BJ (cell line): ENCODE measurements at regions of chr1 and their contacts with region 1.

Region 1: DNA sequence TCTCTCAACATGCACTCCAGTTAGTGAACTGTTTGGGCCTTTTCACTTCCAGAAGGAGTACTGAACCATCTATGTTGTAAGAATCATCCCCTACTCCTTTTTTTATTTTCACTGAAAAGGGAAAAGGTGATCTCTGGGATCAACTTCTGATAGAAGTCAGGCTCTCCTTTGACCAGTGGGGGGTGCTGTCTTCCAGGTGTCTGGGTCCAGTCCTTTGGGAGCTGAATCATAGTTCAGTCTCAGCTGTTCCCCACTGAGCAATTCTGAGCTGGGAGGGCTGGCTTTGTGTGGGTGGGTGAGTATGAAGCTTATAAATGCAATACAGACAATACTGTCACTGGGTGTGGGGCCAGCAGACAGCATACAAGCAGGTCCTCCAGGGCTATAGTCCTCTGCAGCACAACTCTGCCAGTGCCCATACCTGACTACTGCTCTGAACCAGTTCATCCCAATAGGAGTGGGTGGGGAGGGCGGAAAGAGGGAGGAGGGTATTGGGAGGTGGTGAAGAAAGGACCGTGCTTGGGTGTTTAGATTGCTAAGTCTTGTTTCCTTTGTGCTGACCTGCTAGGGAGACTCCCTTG is 12.5 kb upstream of the SARS1 start:
- DNase-seq: peak; percentile 65
- H3K4me3 ChIP-seq: no peak overlapping the region
- H3K27me3 ChIP-seq: no peaks in the 10 kb centered on the region
- CTCF ChIP-seq: peak; percentile 85

Region 2: GRCh38 chr1:109112652-109113285 is 88.4 kb before region 1 on chr1:
- CTCF ChIA-PET with region 1: interaction called, 10 read pairs
- POLR2A ChIA-PET with region 1: no interaction called
- DNase-seq: peak; percentile 44
- H3K4me3 ChIP-seq: peak overlapping the region; percentile 3; the same call in 1 of the 2 replicates
- H3K27me3 ChIP-seq: peaks cover 24% of the 10 kb centered on the region
- CTCF ChIP-seq: peak; percentile 99

Region 3: DNA sequence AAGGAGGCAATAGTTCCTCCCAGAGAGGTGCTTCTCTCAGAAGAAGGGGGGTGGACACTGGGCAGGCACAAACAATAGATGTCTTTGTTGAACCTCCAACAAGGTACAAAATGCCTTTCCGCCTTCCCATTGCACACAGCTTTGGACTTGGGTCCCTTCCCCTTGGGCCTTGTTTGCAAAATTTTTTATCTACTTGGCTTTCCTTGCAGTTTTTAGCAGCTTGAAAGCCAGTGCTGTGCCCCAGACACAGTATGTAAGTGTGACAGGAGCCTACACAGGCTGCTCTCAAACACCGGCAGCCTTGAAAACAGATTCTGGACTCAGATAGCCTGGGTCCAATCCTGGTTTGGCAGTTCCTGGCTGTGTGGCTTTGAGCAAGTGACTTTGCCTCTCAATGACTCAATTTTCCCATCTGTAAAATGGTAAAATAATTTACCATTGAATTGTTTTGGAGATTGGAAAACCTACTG is 44.3 kb before region 1 on chr1:
- CTCF ChIA-PET with region 1: no interaction called
- POLR2A ChIA-PET with region 1: no interaction called
- DNase-seq: no peak
- H3K4me3 ChIP-seq: no peak overlapping the region
- H3K27me3 ChIP-seq: no peaks in the 10 kb centered on the region
- CTCF ChIP-seq: no peak

Region 4: DNA sequence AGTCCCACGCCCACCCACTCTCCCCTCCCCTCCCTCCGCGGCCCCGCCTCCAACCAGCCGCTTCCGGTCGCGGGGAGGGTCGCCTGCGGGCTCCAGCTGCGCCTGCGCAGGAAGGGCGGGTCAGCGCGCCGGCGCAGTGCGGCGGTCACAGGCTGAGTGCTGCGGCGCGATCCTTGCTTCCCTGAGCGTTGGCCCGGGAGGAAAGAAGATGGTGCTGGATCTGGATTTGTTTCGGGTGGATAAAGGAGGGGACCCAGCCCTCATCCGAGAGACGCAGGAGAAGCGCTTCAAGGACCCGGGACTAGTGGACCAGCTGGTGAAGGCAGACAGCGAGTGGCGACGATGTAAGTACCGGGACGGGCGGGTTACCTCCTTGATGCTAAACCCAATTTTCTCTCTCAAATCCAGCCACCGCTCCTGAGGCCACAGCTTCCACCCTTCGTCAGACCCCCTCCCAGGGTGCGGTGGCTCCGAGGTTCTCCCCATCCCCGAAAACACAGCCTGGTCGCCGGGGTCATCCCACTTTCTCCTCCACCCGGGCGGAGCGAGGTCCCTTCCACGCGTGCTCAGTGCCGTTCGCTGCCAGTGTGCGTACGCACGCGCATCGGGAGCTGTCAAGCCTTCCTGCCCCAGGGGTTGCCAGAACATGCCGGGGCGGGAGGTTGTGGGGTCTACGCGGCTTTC is 12.7 kb after region 1 on chr1 and contains the start of gene SARS1:
- CTCF ChIA-PET with region 1: interaction called, 48 read pairs
- POLR2A ChIA-PET with region 1: interaction called, 3 read pairs
- DNase-seq: peak; percentile 42
- H3K4me3 ChIP-seq: peak within 1 kb of the TSS; percentile 66
- H3K27me3 ChIP-seq: no peaks in the 10 kb centered on the region
- CTCF ChIP-seq: no peak
- polyA plus RNA-seq, gene SARS1: 411 and 428 TPM in 2 replicates

Region 5: DNA sequence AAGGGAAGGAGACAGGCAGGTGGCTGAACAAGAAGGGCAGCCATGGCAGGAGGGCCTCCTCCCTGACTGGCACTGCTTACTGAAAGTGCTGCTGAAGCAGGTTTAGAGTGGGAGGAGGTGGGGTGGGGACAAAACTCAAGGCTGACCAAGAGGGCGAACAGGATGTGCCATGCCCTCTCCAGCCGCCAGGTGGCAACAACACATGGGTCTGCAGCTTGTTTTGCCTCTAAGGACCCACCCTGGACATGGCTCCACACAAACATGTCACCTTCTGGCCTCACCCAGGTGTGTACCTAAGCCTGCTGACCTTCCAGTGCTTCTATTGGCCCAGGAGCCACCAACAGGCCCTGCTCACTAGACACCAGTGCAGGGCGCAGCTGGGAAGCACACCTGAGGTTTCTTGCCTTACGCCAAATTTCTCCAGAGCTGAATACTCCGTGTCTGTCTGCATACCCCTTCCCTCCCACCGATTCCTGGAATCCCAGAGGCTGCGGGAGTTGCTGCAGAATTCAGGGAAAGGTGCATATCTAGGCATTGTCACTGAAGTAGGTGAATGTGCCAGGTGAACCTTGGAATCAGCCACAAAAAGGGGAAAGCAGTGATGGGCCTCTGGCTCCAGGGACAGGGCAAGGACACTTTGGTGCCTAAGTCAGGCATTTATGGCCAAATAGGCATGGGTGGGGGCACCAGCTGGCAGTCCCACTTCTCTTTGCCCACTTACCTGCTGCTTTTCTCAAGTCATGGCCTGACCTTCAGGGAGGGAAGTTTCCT is 76.4 kb after region 1 on chr1:
- CTCF ChIA-PET with region 1: interaction called, 10 read pairs
- POLR2A ChIA-PET with region 1: no interaction called
- DNase-seq: no peak
- H3K4me3 ChIP-seq: no peak overlapping the region
- H3K27me3 ChIP-seq: no peaks in the 10 kb centered on the region
- CTCF ChIP-seq: peak; percentile 93